Transverse colon (tissue), 4 donors: ENCODE measurements at regions of chr10 and their contacts with region 1.

Region 1: DNA sequence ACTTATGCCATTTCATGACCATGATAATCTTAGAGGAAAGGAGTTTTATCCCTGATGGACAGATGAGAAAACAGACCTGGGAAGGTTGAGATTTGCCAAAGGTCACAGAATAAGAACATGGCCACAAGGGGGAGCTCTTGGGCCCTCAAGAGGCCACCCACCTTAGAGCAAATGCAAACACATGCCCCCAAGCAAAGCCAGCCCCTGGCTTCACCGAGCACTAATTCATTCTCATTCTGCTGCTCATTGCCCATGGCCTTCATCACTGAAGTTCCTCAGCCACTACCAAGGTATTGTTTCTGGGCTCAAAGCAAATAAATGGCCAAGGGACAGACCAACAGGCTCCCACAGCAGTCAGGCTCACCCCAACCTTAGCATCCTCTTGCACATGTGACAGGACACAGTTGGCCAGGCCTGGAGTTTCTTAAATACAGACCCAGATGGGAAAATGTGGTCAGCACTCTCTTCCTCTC is 44.2 kb downstream of the PDLIM1 start:
- DNase-seq: peak; percentile 81
- H3K4me3 ChIP-seq: no peak overlapping the region
- H3K27ac ChIP-seq: peak overlapping the region; percentile 40 to 58 (median 54)
- H3K4me1 ChIP-seq: peaks cover 0 to 35% (median 4%) of the 10 kb centered on the region in 4 donors
- H3K27me3 ChIP-seq: no peaks in the 10 kb centered on the region
- CTCF ChIP-seq: peak; percentile 79 to 87 (median 82)
- EP300 ChIP-seq: no peak
- POLR2A ChIP-seq: no peak

Region 2: GRCh38 chr10:95363303-95363912 is 116.8 kb after region 1 on chr10:
- in situ Hi-C with region 1: loop called in 3 of 4 experiments (anchors 5 to 10 kb)
- intact Hi-C with region 1: loop called (anchors 5 kb)
- DNase-seq: peak; percentile 47
- H3K4me3 ChIP-seq: no peak overlapping the region
- H3K27ac ChIP-seq: peak overlapping the region in 1 of 4 donors; percentile 15
- H3K4me1 ChIP-seq: peaks cover 3 to 15% (median 9%) of the 10 kb centered on the region in 4 donors
- H3K27me3 ChIP-seq: no peaks in the 10 kb centered on the region
- CTCF ChIP-seq: peak; percentile 83 to 93 (median 87)
- EP300 ChIP-seq: no peak
- POLR2A ChIP-seq: no peak

Region 3: GRCh38 chr10:95628786-95629185 is 382.2 kb after region 1 on chr10:
- in situ Hi-C with region 1: loop called in 1 of 4 experiments (anchors 25 kb)
- intact Hi-C with region 1: no loop called
- DNase-seq: peak; percentile 54
- H3K4me3 ChIP-seq: no peak overlapping the region
- H3K27ac ChIP-seq: peak overlapping the region; percentile 72 to 78 (median 77)
- H3K4me1 ChIP-seq: peaks cover 0 to 40% (median 26%) of the 10 kb centered on the region in 4 donors
- H3K27me3 ChIP-seq: no peaks in the 10 kb centered on the region
- CTCF ChIP-seq: no peak
- EP300 ChIP-seq: no peak
- POLR2A ChIP-seq: peak; percentile 19